Left lung (tissue), 14 donors: ENCODE measurements at regions of chr5 and their contacts with region 1.

Region 1: DNA sequence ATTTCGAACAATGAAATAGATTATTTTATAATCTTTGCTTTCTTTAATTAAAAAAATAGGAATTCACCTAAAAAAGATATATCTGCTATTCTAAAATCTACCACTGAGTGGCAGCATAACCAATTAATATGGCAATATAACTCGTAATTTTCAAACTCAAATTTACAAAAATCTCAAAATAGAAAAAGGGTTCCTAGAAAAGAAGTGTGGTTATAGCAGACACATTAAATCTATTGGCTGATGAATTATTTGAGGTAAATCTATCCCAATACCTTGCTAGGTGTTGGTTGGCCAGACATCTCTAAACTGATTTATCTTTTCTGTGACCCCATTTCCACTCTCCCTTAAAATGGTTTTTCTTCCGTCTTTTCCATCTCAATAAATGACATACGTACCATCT is 30.2 kb upstream of the NRG2 start:
- DNase-seq: peak in 1 of 4 donors; percentile 13
- ATAC-seq: peak; percentile 48
- H3K4me3 ChIP-seq: no peak overlapping the region
- H3K27ac ChIP-seq: no peak overlapping the region
- H3K4me1 ChIP-seq: no peaks in the 10 kb centered on the region
- H3K27me3 ChIP-seq: peaks cover 4 to 14% of the 10 kb centered on the region in 2 donors
- CTCF ChIP-seq: peak; percentile 47 to 67

Region 2: GRCh38 chr5:140038373-140038957 is 34.8 kb before region 1 on chr5:
- intact Hi-C with region 1: no loop called
- DNase-seq: peak in 2 of 4 donors; percentile 40 to 62
- ATAC-seq: peak; percentile 35
- H3K4me3 ChIP-seq: peak overlapping the region in 1 of 2 donors; percentile 30
- H3K27ac ChIP-seq: no peak overlapping the region
- H3K4me1 ChIP-seq: peaks cover 0 to 38% of the 10 kb centered on the region in 2 donors
- H3K27me3 ChIP-seq: peaks cover 2 to 27% of the 10 kb centered on the region in 2 donors
- CTCF ChIP-seq: no peak

Region 3: DNA sequence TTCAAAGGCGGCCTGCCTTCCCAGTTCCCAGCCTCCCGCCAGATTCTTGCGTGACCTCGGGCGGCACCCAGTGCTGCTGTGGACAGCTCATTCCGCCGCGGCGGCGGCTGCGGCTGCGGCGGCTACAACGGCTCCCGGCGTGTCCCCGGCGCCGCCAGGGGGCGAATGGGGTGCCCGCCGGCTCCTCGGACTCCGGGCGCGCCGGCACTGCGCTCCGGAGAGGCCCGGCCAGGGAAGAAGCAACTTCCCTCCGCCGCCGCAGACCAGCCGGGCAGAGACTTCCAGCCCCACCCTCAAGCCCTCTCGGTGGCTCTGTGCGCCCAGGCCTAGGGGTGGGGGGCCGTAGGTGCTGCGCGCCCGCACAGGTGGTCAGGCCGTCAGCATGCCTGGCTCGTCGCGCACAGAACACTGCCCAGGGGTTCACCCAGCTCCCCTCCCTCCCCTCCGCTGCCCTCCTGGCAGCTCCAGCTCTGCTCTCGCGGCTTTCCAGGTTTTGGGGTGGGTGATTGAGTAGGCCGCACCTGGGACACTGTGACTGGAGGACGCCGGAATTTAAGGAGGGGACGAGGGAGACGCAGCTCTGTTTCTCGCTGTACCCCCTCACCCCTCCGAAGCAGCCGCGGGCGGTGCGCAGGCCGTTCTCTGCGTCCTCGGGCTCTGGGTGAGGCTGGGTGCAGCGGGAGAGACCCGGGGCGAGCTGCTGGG is 72.7 kb after region 1 on chr5:
- intact Hi-C with region 1: loop called in 1 of 2 experiments (anchors 5 kb)
- DNase-seq: peak; percentile 57 to 94 (median 72)
- ATAC-seq: peak; percentile 96
- H3K4me3 ChIP-seq: peak overlapping the region; percentile 17 to 27
- H3K27ac ChIP-seq: peak overlapping the region in 1 of 2 donors; percentile 37
- H3K4me1 ChIP-seq: peaks cover 12 to 22% of the 10 kb centered on the region in 2 donors
- H3K27me3 ChIP-seq: peaks cover 0 to 31% of the 10 kb centered on the region in 2 donors
- CTCF ChIP-seq: peak; percentile 69 to 91

Region 4: GRCh38 chr5:140157032-140157803 is 83.9 kb after region 1 on chr5:
- intact Hi-C with region 1: loop called in 1 of 2 experiments (anchors 5 kb)
- DNase-seq: peak; percentile 81 to 95 (median 91)
- ATAC-seq: peak; percentile 97
- H3K4me3 ChIP-seq: peak overlapping the region; percentile 17 to 27
- H3K27ac ChIP-seq: peak overlapping the region; percentile 39 to 60
- H3K4me1 ChIP-seq: peaks cover 0 to 49% of the 10 kb centered on the region in 2 donors
- H3K27me3 ChIP-seq: no peaks in the 10 kb centered on the region
- CTCF ChIP-seq: peak; percentile 79 to 92